ENCODE measurements at regions of chr10 and their contacts with region 1.

Region 1: GRCh38 chr10:97234400-97234799 is 48.6 kb upstream of the SLIT1 start:
- ATAC-seq: peak in 3 of 8 experiments; percentile 15 to 46 (median 43)
- H3K4me3 ChIP-seq: no peak overlapping the region
- H3K27ac ChIP-seq: no peak overlapping the region
- H3K4me1 ChIP-seq: no peaks in the 10 kb centered on the region

Region 2: GRCh38 chr10:96374985-96375830 is 859.2 kb before region 1 on chr10:
- in situ Hi-C with region 1: loop called in 1 of 9 experiments (anchors 25 kb)
- ATAC-seq: peak; percentile 65 to 97 (median 93)
- H3K4me3 ChIP-seq: peak overlapping the region in 4 of 5 donors; percentile 4 to 14 (median 12)
- H3K27ac ChIP-seq: no peak overlapping the region
- H3K4me1 ChIP-seq: peaks cover 4% of the 10 kb centered on the region in 2 donors

Region 3: DNA sequence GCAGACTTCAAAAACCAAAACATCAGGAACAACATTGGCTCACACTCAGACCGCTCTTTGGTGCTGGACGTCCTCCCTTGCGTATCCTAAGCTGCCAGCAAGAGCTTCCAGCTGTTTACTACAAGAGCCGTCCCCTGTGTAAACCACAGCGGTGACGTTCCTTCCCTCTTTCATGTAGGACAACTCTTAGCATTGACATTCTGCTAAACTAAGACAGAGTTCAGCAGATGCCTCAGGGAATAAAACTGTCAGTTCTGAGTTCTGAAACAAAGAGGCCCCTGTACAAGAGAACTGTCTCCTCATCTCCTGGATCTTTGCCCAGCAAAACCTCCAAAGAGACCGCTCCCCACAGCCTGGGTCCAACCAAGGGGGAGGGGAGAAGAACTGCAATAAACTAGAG is 817.8 kb before region 1 on chr10:
- in situ Hi-C with region 1: loop called in 1 of 9 experiments (anchors 25 kb)
- ATAC-seq: peak in 4 of 8 experiments; percentile 11 to 60 (median 24)
- H3K4me3 ChIP-seq: no peak overlapping the region
- H3K27ac ChIP-seq: no peak overlapping the region
- H3K4me1 ChIP-seq: peaks cover 5 to 16% of the 10 kb centered on the region in 2 donors